IMR-90 (cell line): ENCODE measurements at regions of chr15 and their contacts with region 1.

Region 1: DNA sequence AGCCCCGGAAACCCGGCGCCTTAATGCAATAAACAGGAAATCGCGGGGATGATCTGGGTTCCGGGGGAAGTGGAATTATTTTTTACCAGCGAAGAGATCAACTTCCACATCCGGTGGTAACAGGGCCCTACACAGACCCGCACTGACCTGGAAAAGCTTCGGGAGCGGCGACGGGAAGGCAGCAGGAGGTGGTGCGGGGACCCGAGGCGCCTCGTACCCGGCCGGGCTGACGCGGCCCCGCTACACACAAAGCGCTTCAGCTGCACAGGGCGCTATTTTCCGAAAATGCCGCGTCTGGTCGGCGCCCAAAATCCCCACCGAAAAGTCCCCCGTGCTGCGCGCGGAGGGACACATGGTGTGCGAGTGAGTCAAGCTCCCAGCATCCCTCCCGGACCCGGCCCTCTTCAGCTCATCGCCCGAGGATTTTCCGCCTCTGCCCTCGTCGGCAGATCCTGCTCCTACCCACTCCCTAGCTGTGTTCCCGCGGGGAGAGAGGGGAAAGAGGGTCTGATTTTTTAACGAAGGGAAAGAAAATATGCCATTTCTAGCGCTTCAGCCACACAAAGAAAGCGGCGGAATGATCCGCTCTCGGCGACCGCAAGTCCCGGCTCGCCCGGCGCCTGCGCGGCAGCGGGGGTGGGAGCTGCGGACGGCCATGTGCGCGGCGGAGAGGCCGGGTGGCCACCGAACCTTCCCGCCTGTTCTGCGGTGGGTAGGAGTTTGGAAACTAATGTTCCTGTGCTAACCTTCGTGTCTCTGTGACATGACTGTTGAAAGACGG is at the start of gene GABPB1:
- DNase-seq: peak; percentile 94
- ATAC-seq: peak; percentile 66
- H3K4me3 ChIP-seq: peak within 1 kb of the TSS; percentile 60
- H3K27ac ChIP-seq: peak within 1 kb of the TSS; percentile 98
- H3K4me1 ChIP-seq: no peaks in the 10 kb centered on the region; the same call in 1 of the 2 replicates
- H3K27me3 ChIP-seq: no peaks in the 10 kb centered on the region
- CTCF ChIP-seq: no peak
- POLR2A ChIP-seq: peak; percentile 90; the same call in 1 of the 2 replicates
- RAD21 ChIP-seq: no peak
- total RNA-seq, gene GABPB1: 76.4 and 89.3 TPM in 2 replicates

Region 2: DNA sequence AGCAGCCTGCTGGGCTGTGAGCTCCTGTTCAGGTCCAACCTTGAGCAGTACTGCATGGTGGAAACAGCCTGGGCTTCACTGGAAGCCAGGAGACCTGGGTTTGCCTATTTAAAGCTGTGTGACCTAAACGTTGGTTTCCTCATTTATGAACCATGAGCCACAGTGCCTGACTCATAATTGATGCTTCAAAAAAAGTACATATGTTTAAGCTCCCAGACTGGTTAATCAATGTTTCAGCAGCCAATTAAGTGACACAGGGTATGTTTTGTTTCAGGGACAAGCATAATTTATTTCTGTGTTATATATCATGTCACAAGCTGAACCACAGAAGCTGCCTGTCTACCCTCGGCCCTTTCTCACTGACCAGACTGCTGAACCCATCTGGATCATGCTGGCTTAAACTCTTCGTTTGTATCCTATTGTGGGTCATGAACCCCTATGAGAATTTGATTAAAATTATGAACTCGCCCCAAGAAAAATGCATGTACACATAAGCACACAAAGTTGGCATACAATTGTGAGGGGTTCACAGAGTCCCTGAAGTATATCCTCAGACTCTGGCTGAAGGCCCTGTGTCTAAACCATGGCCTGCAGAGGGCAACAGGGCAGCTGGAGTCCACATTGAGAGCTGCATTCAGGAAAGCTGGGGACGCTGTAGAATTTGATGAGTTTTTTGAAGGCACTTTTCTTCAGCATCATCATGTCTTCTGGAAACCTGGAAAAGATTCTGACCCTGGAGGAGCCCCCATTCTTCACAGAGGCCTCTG is 113.2 kb before region 1 on chr15:
- CTCF ChIA-PET with region 1: no interaction called
- POLR2A ChIA-PET with region 1: no interaction called
- dilution Hi-C with region 1: no loop called
- in situ Hi-C with region 1: no loop called
- intact Hi-C with region 1: no loop called
- DNase-seq: peak; percentile 70
- ATAC-seq: peak; percentile 63; the same call in 1 of the 2 replicates
- H3K4me3 ChIP-seq: no peak overlapping the region
- H3K27ac ChIP-seq: no peak overlapping the region
- H3K4me1 ChIP-seq: no peaks in the 10 kb centered on the region; the same call in 1 of the 2 replicates
- H3K27me3 ChIP-seq: no peaks in the 10 kb centered on the region
- CTCF ChIP-seq: no peak
- POLR2A ChIP-seq: no peak
- RAD21 ChIP-seq: no peak

Region 3: DNA sequence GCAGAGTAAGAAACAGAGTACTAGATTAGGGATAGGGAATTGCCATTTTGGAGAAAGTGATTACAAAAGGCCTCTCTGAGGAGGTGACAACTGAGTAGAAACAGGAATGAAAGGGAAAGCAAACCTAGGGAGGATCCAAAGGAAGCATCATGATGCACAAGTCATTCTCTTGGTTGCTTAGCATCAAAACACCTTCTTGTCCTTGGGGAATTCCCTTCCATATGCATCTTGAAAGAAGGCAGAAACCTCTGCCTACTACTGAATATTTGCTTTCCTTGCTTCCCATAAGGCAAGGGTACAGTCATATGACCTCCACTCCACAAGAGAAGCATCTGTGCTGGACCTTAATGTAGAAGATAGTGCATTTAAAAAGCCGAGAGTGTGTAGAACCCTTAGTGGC is 24.1 kb before region 1 on chr15:
- CTCF ChIA-PET with region 1: no interaction called
- POLR2A ChIA-PET with region 1: no interaction called
- dilution Hi-C with region 1: no loop called
- in situ Hi-C with region 1: no loop called
- intact Hi-C with region 1: no loop called
- DNase-seq: peak; percentile 38
- ATAC-seq: no peak
- H3K4me3 ChIP-seq: no peak overlapping the region
- H3K27ac ChIP-seq: no peak overlapping the region
- H3K4me1 ChIP-seq: no peaks in the 10 kb centered on the region
- H3K27me3 ChIP-seq: no peaks in the 10 kb centered on the region
- CTCF ChIP-seq: no peak
- POLR2A ChIP-seq: no peak
- RAD21 ChIP-seq: no peak

Region 4: DNA sequence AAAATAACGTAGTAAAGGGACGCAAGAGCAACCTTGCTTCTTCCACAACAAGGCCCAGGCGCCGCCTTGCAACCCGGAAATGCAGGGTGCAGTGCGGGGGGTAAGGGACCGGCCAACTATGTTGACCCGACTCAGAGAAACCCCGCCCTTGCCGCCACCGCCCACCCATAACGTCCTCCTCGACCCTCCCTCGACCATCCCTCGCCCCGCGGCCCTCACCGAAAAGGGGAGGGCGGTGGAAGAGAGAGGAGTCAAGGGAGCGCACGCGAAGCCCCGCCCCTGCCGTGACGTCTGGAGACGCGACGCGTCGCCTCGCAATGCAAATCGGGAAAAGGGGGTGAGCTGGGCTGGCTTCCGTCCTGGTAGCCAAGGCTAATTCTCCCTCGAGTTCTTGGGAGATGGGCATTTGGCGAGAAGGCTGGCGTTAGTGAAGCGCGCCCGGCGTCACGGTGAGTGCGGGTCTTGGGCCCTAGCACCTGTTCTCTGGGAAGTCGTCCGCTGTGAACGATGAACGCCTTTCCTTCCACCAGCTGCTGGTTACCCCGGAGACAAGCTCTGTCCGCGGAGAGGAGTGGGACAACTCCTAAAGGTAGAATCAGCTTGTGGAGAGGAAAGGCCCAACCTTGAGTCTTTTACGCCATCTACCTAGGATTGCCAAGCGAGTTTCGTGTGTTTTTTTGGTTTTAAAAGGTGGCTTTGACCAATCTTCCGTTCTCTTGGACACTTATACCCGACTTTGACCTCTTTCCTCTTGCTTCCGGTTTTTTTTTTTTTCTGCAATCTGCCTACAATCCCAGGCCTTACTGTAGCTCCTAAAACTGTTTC is 69.2 kb after region 1 on chr15 and contains the start of gene USP8:
- CTCF ChIA-PET with region 1: interaction called, 3 read pairs
- POLR2A ChIA-PET with region 1: no interaction called
- dilution Hi-C with region 1: no loop called
- in situ Hi-C with region 1: no loop called
- intact Hi-C with region 1: loop called (anchors 1 kb)
- DNase-seq: peak; percentile 95
- ATAC-seq: peak; percentile 100
- H3K4me3 ChIP-seq: peak within 1 kb of the TSS; percentile 95
- H3K27ac ChIP-seq: peak within 1 kb of the TSS; percentile 89
- H3K4me1 ChIP-seq: no peaks in the 10 kb centered on the region; the same call in 1 of the 2 replicates
- H3K27me3 ChIP-seq: no peaks in the 10 kb centered on the region
- CTCF ChIP-seq: no peak
- POLR2A ChIP-seq: peak; percentile 98
- RAD21 ChIP-seq: no peak
- total RNA-seq, gene USP8: 52.2 and 61.7 TPM in 2 replicates

Region 5: GRCh38 chr15:50452927-50453326 is 97.9 kb after region 1 on chr15:
- CTCF ChIA-PET with region 1: no interaction called
- POLR2A ChIA-PET with region 1: no interaction called
- dilution Hi-C with region 1: no loop called
- in situ Hi-C with region 1: no loop called
- intact Hi-C with region 1: loop called (anchors 5 kb)
- DNase-seq: peak; percentile 59
- ATAC-seq: peak; percentile 82
- H3K4me3 ChIP-seq: no peak overlapping the region
- H3K27ac ChIP-seq: no peak overlapping the region
- H3K4me1 ChIP-seq: peaks cover 5% of the 10 kb centered on the region
- H3K27me3 ChIP-seq: no peaks in the 10 kb centered on the region
- CTCF ChIP-seq: no peak
- POLR2A ChIP-seq: no peak
- RAD21 ChIP-seq: no peak

Region 6: DNA sequence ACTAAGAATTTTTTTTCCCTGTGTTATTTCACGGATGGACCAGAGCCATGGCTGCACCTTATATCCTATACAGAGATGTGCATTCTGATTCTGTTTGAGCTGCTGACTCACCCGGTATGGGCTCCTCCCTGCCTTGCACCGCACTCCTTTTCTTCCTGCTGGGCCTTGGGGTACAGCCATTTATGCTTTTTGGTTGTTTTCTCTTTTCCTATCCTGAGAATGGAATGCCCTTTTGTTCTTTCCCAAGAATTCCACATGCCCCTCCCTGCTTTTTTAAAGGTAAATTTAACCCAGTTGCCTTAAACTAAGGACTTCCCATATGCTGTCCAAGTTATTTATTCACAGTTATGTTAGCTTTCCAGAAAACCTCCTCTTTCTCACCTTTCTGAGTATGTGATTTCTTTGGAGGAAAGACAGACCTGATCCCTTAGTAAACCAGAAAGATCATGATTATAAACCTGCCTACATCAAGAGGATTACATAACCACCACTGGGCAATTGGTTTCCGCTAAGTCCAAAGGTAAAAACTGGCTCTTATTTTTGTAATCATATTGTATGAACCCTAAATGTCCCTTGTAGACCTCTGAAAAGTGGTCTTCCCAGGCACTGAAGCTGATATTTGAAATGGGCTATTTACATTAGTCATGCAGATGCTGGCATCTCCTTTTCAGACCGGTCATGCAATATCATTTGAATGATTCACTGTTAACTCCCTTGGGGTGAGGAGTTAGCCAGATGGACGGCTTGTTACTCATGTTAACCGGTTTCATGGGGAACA is 1519.9 kb after region 1 on chr15:
- CTCF ChIA-PET with region 1: no interaction called
- POLR2A ChIA-PET with region 1: no interaction called
- dilution Hi-C with region 1: no loop called
- in situ Hi-C with region 1: no loop called
- intact Hi-C with region 1: loop called (anchors 10 kb)
- DNase-seq: peak; percentile 99
- ATAC-seq: peak; percentile 89
- H3K4me3 ChIP-seq: no peak overlapping the region
- H3K27ac ChIP-seq: peak overlapping the region; percentile 41
- H3K4me1 ChIP-seq: peaks cover 11% of the 10 kb centered on the region; the same call in 1 of the 2 replicates
- H3K27me3 ChIP-seq: no peaks in the 10 kb centered on the region
- CTCF ChIP-seq: no peak
- POLR2A ChIP-seq: no peak
- RAD21 ChIP-seq: 0 out of 2 replicates have a peak, but pooled peaks have one; percentile 5